Dendritic cell treated with granulocyte-macrophage colony-stimulating factor and Interleukin-4, amounts not matched to agents 40 ng/mL and 50 ng/mL, for 4 days (primary cell): ENCODE measurements at regions of chr13 and their contacts with region 1.

Region 1: GRCh38 chr13:20566898-20567874 is at the start of gene IFT88:
- H3K4me3 Mint-ChIP-seq: peak within 1 kb of the TSS; percentile 91
- H3K27ac Mint-ChIP-seq: peak within 1 kb of the TSS; percentile 96
- H3K4me1 Mint-ChIP-seq: peaks cover 16% of the 10 kb centered on the region
- H3K27me3 Mint-ChIP-seq: peaks cover 5% of the 10 kb centered on the region

Region 2: DNA sequence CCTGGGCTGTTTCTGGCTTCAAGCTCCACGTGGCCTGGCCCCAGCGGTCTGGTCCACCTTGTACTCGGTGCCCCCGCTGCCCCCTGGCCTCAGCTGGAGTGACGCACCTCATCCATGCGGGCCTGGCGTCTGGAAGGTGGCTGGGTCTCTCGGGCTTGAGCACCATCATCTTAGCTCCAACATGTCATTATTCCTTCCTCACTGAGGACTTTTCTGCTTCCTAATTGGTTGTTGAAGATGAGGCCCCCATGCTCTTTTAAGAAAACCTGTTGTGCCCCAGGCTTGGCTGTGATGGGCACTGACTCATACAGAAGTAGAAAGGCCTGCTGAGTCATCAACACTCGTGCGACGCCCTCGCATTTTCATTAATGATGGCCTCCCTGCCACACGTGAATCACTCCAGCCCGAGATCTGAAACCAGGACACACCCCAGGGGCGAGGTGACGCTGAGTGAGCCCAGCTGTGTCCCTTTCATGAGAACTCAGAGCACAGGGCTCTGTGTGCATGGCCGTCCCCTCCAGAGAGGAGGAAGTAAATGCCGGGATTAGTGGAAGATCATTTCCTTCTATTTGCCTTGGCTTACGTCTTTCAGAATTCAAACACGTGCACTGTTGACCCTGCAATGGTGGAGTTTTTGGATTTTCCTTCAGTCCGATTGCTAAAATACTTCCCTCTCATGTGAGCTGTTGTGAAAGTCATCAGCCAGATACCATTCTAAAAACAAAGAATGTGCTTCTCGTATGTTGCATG is 392.4 kb before region 1 on chr13:
- intact Hi-C with region 1: loop called (anchors 5 kb)
- H3K4me3 Mint-ChIP-seq: peak overlapping the region; percentile 60
- H3K27ac Mint-ChIP-seq: peak overlapping the region; percentile 73
- H3K4me1 Mint-ChIP-seq: peaks cover 61% of the 10 kb centered on the region
- H3K27me3 Mint-ChIP-seq: peaks cover 58% of the 10 kb centered on the region

Region 3: DNA sequence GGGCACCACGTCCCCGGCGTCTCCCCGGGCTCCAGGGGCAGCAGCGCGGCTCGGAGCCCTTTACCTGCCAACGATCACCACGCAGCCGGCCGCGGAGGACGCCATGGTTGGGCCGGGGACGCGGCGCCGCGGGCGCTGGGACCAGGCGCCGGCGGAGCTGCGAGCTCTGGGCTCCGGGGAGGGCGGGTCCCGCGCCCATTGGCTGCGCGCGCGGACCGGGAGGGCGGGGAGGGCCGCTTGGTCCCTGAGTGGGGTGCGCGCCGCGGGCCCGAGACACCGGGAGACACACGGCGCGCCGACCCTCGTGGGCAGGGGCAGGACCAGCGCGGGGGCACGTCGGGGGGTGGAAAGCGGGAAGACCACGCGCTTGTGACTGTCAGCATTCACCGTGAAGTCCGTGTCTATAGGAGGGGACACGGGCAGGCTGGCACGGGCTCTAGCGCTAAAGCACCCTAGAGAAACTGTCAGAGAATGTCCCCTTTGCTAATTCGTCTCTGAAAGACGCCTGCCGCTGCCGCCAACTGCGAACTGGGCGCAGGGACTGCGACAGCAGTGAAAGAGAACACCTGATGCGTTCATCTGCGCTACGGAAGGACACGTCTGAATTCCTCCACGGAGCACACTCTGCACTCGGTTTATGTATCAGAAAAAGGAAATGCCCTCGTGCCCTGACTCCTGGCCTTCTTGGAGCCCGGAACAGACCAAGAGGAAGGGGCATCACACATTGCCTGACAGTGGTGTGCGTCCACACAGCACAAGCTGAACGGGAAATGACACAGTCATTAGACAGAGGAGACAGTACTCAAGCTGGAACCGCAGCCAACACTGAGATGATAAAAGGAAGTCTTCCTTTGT is 41.3 kb before region 1 on chr13 and contains the start of gene CRYL1:
- intact Hi-C with region 1: loop called (anchors 2 kb)
- H3K4me3 Mint-ChIP-seq: peak within 1 kb of the TSS; percentile 86
- H3K27ac Mint-ChIP-seq: peak within 1 kb of the TSS; percentile 96
- H3K4me1 Mint-ChIP-seq: peaks cover 42% of the 10 kb centered on the region
- H3K27me3 Mint-ChIP-seq: no peaks in the 10 kb centered on the region

Region 4: GRCh38 chr13:20773194-20774080 is 206.3 kb after region 1 on chr13 and contains the start of gene EEF1AKMT1:
- intact Hi-C with region 1: loop called (anchors 5 kb)
- H3K4me3 Mint-ChIP-seq: peak within 1 kb of the TSS; percentile 87
- H3K27ac Mint-ChIP-seq: peak within 1 kb of the TSS; percentile 92
- H3K4me1 Mint-ChIP-seq: peaks cover 14% of the 10 kb centered on the region
- H3K27me3 Mint-ChIP-seq: no peaks in the 10 kb centered on the region